Heart left ventricle (tissue), 16 donors: ENCODE measurements at regions of chr1 and their contacts with region 1.

Region 1: DNA sequence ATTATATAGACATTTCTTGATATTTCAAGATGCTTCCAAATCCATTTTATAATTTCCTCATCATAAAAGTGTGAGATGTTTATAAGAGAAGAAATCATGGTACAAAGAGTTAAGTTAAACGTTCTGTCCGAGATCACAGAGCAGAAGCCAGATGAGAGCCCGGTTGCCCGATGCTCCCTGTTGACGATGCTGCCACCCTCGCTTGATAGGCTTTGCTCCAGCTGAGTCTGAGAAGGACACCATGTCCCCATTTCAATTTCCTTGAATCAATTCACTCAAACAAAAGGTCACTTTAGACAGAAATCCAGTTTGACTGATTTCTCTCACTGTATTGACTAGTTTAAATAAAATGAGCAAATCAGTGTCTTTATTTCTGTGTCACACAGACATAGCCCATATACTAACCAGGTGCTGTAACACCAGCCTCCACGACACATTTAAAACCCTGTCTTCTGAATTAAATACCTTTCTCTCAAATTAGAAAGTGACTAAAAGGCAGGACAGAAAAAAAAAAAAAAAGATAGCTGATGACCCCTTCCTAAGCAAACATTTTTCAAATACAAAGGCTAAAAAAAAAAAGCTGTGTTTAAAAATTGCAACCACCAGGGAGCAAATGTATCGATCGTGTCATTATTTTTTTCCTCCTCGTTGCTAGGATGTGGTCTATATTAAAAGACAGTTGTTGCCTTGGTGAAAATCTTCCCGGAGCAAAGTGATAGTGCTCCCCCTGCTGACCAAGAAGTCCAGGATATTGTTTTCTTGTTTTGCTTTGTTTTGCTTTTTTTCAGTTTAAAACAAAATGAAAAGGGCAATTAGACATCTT is 35.2 kb downstream of the DNASE2B start:
- DNase-seq: peak in 3 of 5 donors; percentile 29 to 41 (median 40)
- ATAC-seq: peak; percentile 69 to 86 (median 75)
- H3K4me3 ChIP-seq: peak overlapping the region in 10 of 12 donors; percentile 17 to 45 (median 34)
- H3K27ac ChIP-seq: no peak overlapping the region
- H3K4me1 ChIP-seq: peaks cover 0 to 47% (median 6%) of the 10 kb centered on the region in 12 donors
- H3K27me3 ChIP-seq: no peaks in the 10 kb centered on the region
- CTCF ChIP-seq: peak; percentile 53 to 82 (median 72)
- POLR2A ChIP-seq: no peak

Region 2: DNA sequence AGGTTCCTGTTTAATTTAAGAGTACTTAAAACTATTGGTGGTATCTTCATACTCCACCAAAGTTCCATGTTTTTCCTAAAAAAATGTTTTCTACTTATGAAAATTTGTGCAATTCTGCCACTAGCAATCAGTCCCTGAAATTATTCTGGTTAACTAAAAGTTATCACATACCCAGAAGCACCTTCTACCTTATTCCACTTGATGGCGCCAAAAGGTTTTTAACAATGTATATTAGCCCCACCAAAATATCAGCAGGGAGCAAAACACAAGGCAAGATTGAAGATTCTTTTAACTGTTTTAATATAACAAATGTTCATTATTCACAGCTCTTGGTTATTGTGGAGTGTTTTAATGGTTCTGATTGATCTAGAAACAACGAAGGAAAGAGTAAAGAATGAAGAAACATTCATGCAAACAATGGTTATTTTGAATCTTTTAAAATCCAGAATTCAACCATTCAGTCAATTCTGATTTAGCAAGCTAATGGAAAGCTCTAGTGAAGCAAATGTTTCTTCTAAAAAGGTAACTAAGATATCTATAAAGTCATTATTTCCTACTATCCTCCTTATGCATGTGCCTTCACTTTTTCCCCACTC is 501.7 kb before region 1 on chr1:
- intact Hi-C with region 1: loop called (anchors 2 to 5 kb)
- DNase-seq: peak in 1 of 5 donors; percentile 10
- ATAC-seq: peak; percentile 58 to 80 (median 66)
- H3K4me3 ChIP-seq: no peak overlapping the region
- H3K27ac ChIP-seq: no peak overlapping the region
- H3K4me1 ChIP-seq: peaks cover 0 to 5% (median 0%) of the 10 kb centered on the region in 12 donors
- H3K27me3 ChIP-seq: no peaks in the 10 kb centered on the region
- CTCF ChIP-seq: peak; percentile 56 to 76 (median 68)
- POLR2A ChIP-seq: no peak

Region 3: DNA sequence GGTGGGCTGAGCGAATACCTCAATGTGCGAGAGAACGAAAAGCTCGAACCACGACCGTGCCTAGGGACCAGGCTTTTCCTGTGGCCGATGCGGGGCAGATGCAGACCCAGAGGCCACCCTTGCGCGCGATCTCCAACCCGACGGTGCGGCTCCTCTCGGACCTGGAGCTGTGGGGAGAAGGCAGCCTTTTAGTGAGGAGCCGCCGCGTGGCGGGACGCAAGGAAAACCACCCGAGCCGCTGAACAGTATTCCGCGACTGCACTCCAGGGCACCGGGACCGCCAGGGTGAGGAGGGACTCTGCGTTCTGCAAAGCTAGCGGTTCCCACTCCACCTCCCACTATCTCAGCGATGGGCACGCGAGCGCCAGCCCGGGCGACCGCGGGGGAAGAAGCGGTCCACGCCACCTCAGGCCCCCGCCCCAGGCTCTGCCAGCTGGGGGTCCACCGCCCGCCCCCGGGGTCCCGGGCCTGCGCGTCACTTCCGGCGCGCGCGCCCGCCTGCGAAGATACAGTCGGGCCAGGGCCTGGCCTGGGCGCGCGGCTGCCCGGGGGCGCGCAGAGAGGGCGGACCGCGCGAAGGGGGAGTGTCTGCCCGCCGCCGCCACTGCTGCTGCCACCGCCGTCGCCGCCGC is 355.9 kb before region 1 on chr1:
- intact Hi-C with region 1: loop called in 1 of 10 experiments (anchors 5 kb)
- DNase-seq: peak; percentile 75 to 87 (median 78)
- ATAC-seq: peak; percentile 91 to 99 (median 97)
- H3K4me3 ChIP-seq: peak overlapping the region; percentile 73 to 96 (median 86)
- H3K27ac ChIP-seq: peak overlapping the region; percentile 9 to 95 (median 88)
- H3K4me1 ChIP-seq: peaks cover 0 to 17% (median 9%) of the 10 kb centered on the region in 12 donors
- H3K27me3 ChIP-seq: no peaks in the 10 kb centered on the region
- CTCF ChIP-seq: peak in 3 of 12 donors; percentile 6 to 23 (median 11)
- POLR2A ChIP-seq: no peak

Region 4: DNA sequence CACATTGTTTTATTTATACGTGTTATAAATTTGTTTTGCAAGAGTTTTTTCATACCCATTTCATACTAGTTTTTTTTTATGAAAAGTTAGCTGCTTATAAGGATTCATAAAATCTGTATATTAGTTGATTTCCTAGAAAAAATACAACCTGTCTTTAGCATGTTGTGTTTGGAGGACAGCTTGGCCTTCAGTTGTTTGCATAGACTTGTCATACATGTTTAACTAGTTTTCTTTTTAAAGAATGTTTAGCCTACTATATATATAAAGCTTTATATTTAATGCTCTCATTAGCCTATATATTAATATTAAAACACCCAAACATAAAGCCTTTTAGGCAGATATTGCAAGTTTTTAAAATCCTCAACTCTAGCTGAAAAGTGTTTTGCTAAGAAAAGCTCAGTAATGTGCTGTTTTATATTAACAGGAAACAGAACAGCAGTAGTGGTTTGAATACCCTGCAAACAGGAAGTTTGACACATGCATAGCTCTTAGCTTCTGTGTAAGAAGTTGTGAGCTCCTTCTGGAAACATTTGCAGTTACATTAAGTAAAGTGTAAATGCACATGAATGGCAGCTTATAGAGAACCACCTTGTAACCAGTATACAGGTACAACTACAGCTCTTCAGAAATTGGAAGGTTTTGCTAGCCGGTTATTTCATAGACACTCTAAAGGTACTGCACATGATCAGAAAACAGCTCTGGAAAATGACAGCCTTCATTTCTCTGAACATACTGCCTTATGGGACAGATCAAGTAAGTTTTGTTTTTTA is 289.5 kb before region 1 on chr1 and contains the start of gene PRKACB:
- intact Hi-C with region 1: loop called (anchors 2 to 10 kb)
- DNase-seq: no peak
- ATAC-seq: peak in 3 of 4 donors; percentile 56 to 67 (median 64)
- H3K4me3 ChIP-seq: peak within 1 kb of the TSS in 6 of 12 donors; percentile 0 to 52 (median 24)
- H3K27ac ChIP-seq: peak within 1 kb of the TSS in 1 of 12 donors; percentile 87
- H3K4me1 ChIP-seq: peaks cover 0 to 26% (median 0%) of the 10 kb centered on the region in 12 donors
- H3K27me3 ChIP-seq: no peaks in the 10 kb centered on the region
- CTCF ChIP-seq: no peak
- POLR2A ChIP-seq: no peak
- total RNA-seq, gene PRKACB: 16.6 to 52.3 (median 41.1) TPM

Region 5: DNA sequence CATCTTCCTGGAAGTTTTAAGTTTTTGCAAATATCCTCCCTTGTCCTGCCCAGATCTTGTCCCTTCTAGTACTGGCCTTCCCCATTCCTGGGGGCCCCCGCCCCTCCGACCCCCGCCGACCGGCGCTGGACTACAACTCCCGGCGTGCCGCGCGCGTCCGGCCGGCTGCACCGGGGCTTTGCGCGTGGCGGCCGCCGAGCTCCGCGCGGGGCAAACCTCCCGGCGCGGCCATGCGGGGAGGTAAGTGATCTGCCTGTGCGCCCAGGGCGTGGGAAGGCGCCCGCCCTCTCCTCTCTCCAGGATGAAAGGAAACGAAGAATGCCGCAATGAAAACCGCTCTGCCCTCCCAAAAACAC is 135.2 kb before region 1 on chr1:
- intact Hi-C with region 1: loop called in 2 of 10 experiments (anchors 10 kb)
- DNase-seq: peak; percentile 61 to 83 (median 66)
- ATAC-seq: peak; percentile 72 to 91 (median 82)
- H3K4me3 ChIP-seq: peak overlapping the region; percentile 69 to 93 (median 82)
- H3K27ac ChIP-seq: peak overlapping the region; percentile 78 to 92 (median 86)
- H3K4me1 ChIP-seq: peaks cover 0 to 42% (median 27%) of the 10 kb centered on the region in 12 donors
- H3K27me3 ChIP-seq: no peaks in the 10 kb centered on the region
- CTCF ChIP-seq: no peak
- POLR2A ChIP-seq: peak in 1 of 2 donors; percentile 59

Region 6: GRCh38 chr1:84772428-84772943 is 339.0 kb after region 1 on chr1:
- intact Hi-C with region 1: loop called in 3 of 10 experiments (anchors 10 kb)
- DNase-seq: peak; percentile 73 to 79 (median 76)
- ATAC-seq: peak; percentile 78 to 91 (median 88)
- H3K4me3 ChIP-seq: no peak overlapping the region
- H3K27ac ChIP-seq: no peak overlapping the region
- H3K4me1 ChIP-seq: peaks cover 0 to 3% (median 0%) of the 10 kb centered on the region in 12 donors
- H3K27me3 ChIP-seq: peaks cover 0 to 8% (median 0%) of the 10 kb centered on the region in 9 donors
- CTCF ChIP-seq: peak; percentile 82 to 96 (median 94)
- POLR2A ChIP-seq: no peak